Breast epithelium (tissue), 4 donors: ENCODE measurements at regions of chr10 and their contacts with region 1.

Region 1: GRCh38 chr10:6242089-6242488 is 39.4 kb downstream of the PFKFB3 start:
- DNase-seq: no peak
- H3K4me3 ChIP-seq: no peak overlapping the region
- H3K27ac ChIP-seq: no peak overlapping the region
- H3K4me1 ChIP-seq: peaks cover 0 to 4% of the 10 kb centered on the region in 2 donors
- H3K27me3 ChIP-seq: no peaks in the 10 kb centered on the region
- CTCF ChIP-seq: no peak
- POLR2A ChIP-seq: no peak

Region 2: DNA sequence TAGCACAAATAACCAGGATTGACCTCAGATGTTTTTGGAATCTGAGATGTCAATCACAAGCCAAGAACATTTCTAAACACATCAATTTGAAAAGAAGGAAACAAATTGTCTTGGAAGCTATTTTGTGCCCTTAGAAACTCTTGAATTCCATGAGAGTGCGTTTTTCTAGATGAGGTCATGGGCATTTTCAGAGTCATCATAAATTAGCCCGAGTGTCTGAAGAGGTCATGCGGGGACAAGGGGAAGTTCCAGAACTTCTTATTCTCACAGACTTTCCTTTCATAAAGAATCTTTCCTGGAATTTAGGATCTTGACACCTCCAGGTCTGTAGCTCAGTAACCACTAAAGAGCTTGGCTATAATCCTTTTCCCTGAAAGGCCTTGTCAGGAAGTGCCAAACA is 208.1 kb before region 1 on chr10:
- intact Hi-C with region 1: no loop called
- DNase-seq: no peak
- H3K4me3 ChIP-seq: no peak overlapping the region
- H3K27ac ChIP-seq: no peak overlapping the region
- H3K4me1 ChIP-seq: no peaks in the 10 kb centered on the region
- H3K27me3 ChIP-seq: no peaks in the 10 kb centered on the region
- CTCF ChIP-seq: no peak
- POLR2A ChIP-seq: no peak

Region 3: GRCh38 chr10:6226216-6226615 is 15.9 kb before region 1 on chr10:
- intact Hi-C with region 1: loop called (anchors 2 kb)
- DNase-seq: no peak
- H3K4me3 ChIP-seq: no peak overlapping the region
- H3K27ac ChIP-seq: no peak overlapping the region
- H3K4me1 ChIP-seq: peaks cover 0 to 4% of the 10 kb centered on the region in 2 donors
- H3K27me3 ChIP-seq: no peaks in the 10 kb centered on the region
- CTCF ChIP-seq: no peak
- POLR2A ChIP-seq: no peak

Region 4: GRCh38 chr10:6464862-6465430 is 222.9 kb after region 1 on chr10:
- intact Hi-C with region 1: no loop called
- DNase-seq: no peak
- H3K4me3 ChIP-seq: no peak overlapping the region
- H3K27ac ChIP-seq: no peak overlapping the region
- H3K4me1 ChIP-seq: no peaks in the 10 kb centered on the region
- H3K27me3 ChIP-seq: no peaks in the 10 kb centered on the region
- CTCF ChIP-seq: no peak
- POLR2A ChIP-seq: no peak